GM12878 (cell line): ENCODE measurements at regions of chr18 and their contacts with region 1.

Region 1: DNA sequence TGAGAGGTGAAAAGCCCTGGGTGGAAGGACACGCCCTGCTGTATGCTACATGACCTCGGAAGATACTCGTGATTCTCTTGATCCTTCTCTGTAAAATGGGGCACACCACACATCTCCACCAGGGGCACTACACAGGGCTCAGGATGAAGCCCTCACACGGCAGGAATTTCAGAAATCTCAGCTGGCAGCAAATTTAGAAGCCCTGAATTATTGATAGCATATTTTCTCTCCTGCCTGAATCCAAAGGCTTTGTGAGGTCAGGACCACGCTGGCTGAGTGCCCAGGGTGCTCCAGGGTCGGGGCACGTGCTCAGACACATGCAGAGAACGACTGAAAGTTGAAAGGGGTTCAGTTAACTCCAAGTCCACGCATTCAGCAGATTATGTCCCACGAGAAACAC is 42.1 kb upstream of the GALR1 start:
- DNase-seq: no peak
- ATAC-seq: peak; percentile 54
- H3K4me3 ChIP-seq: no peak overlapping the region
- H3K27ac ChIP-seq: no peak overlapping the region
- H3K4me1 ChIP-seq: peaks cover 4% of the 10 kb centered on the region
- H3K27me3 ChIP-seq: no peaks in the 10 kb centered on the region
- CTCF ChIP-seq: peak in 2 of 3 experiments; percentile 47 to 61; a peak in 4 of 6 replicates
- EP300 ChIP-seq: no peak
- POLR2A ChIP-seq: no peak
- RAD21 ChIP-seq: 0 out of 2 replicates have a peak, but pooled peaks have one; percentile 2

Region 2: GRCh38 chr18:76991021-76991688 is 216.4 kb before region 1 on chr18:
- CTCF ChIA-PET with region 1: interaction called, 24 read pairs
- POLR2A ChIA-PET with region 1: no interaction called
- RAD21 ChIA-PET with region 1: interaction called, 8 read pairs
- SMC1A ChIA-PET with region 1: interaction called, 10 read pairs
- in situ Hi-C with region 1: no loop called
- intact Hi-C with region 1: no loop called
- DNase-seq: no peak
- ATAC-seq: no peak
- H3K4me3 ChIP-seq: no peak overlapping the region
- H3K27ac ChIP-seq: no peak overlapping the region
- H3K4me1 ChIP-seq: peaks cover 9% of the 10 kb centered on the region; the same call in 1 of the 2 replicates
- H3K27me3 ChIP-seq: no peaks in the 10 kb centered on the region
- CTCF ChIP-seq: no peak
- EP300 ChIP-seq: no peak
- POLR2A ChIP-seq: no peak
- RAD21 ChIP-seq: no peak

Region 3: GRCh38 chr18:77054606-77055428 is 152.7 kb before region 1 on chr18:
- CTCF ChIA-PET with region 1: interaction called, 24 read pairs
- POLR2A ChIA-PET with region 1: no interaction called
- RAD21 ChIA-PET with region 1: interaction called, 13 read pairs
- SMC1A ChIA-PET with region 1: interaction called, 15 read pairs
- in situ Hi-C with region 1: no loop called
- intact Hi-C with region 1: no loop called
- DNase-seq: peak; percentile 80
- ATAC-seq: peak; percentile 93
- H3K4me3 ChIP-seq: peak overlapping the region; percentile 53
- H3K27ac ChIP-seq: peak overlapping the region; percentile 88
- H3K4me1 ChIP-seq: peaks cover 46% of the 10 kb centered on the region
- H3K27me3 ChIP-seq: no peaks in the 10 kb centered on the region
- CTCF ChIP-seq: peak; percentile 73 to 78 (median 75)
- EP300 ChIP-seq: peak; percentile 70 to 74
- POLR2A ChIP-seq: no peak; the same call in 1 of the 2 replicates
- RAD21 ChIP-seq: peak; percentile 58

Region 4: GRCh38 chr18:77067291-77068061 is 140.1 kb before region 1 on chr18:
- CTCF ChIA-PET with region 1: interaction called, 37 read pairs
- POLR2A ChIA-PET with region 1: interaction called, 3 read pairs
- RAD21 ChIA-PET with region 1: interaction called, 11 read pairs
- SMC1A ChIA-PET with region 1: interaction called, 14 read pairs
- in situ Hi-C with region 1: no loop called
- intact Hi-C with region 1: loop called (anchors 2 kb)
- DNase-seq: peak; percentile 59
- ATAC-seq: peak; percentile 68
- H3K4me3 ChIP-seq: peak overlapping the region; percentile 23; the same call in 1 of the 2 replicates
- H3K27ac ChIP-seq: peak overlapping the region; percentile 97
- H3K4me1 ChIP-seq: peaks cover 71% of the 10 kb centered on the region
- H3K27me3 ChIP-seq: no peaks in the 10 kb centered on the region
- CTCF ChIP-seq: peak; percentile 15 to 18 (median 16); a peak in 2 of 6 replicates
- EP300 ChIP-seq: no peak
- POLR2A ChIP-seq: no peak
- RAD21 ChIP-seq: no peak

Region 5: GRCh38 chr18:77124452-77124922 is 83.1 kb before region 1 on chr18:
- CTCF ChIA-PET with region 1: interaction called, 13 read pairs
- POLR2A ChIA-PET with region 1: interaction called, 5 read pairs
- RAD21 ChIA-PET with region 1: interaction called, 20 read pairs
- SMC1A ChIA-PET with region 1: interaction called, 5 read pairs
- in situ Hi-C with region 1: no loop called
- intact Hi-C with region 1: loop called (anchors 2 kb)
- DNase-seq: peak; percentile 69
- ATAC-seq: peak; percentile 71
- H3K4me3 ChIP-seq: peak overlapping the region; percentile 72
- H3K27ac ChIP-seq: peak overlapping the region; percentile 92
- H3K4me1 ChIP-seq: peaks cover 43% of the 10 kb centered on the region
- H3K27me3 ChIP-seq: no peaks in the 10 kb centered on the region
- CTCF ChIP-seq: no peak
- EP300 ChIP-seq: 0 out of 4 replicates have a peak, but pooled peaks of 1 of the 2 experiments have one; percentile 32
- POLR2A ChIP-seq: no peak; the same call in 1 of the 2 replicates
- RAD21 ChIP-seq: no peak

Region 6: GRCh38 chr18:77191071-77191751 is 16.3 kb before region 1 on chr18:
- CTCF ChIA-PET with region 1: interaction called, 17 read pairs
- POLR2A ChIA-PET with region 1: no interaction called
- RAD21 ChIA-PET with region 1: no interaction called
- SMC1A ChIA-PET with region 1: no interaction called
- in situ Hi-C with region 1: no loop called
- intact Hi-C with region 1: no loop called
- DNase-seq: no peak
- ATAC-seq: no peak
- H3K4me3 ChIP-seq: no peak overlapping the region
- H3K27ac ChIP-seq: no peak overlapping the region
- H3K4me1 ChIP-seq: no peaks in the 10 kb centered on the region
- H3K27me3 ChIP-seq: no peaks in the 10 kb centered on the region; a peak in 1 of 4 replicates
- CTCF ChIP-seq: no peak
- EP300 ChIP-seq: no peak
- POLR2A ChIP-seq: no peak
- RAD21 ChIP-seq: no peak

Region 7: GRCh38 chr18:77522051-77522675 is 314.6 kb after region 1 on chr18:
- CTCF ChIA-PET with region 1: no interaction called
- POLR2A ChIA-PET with region 1: no interaction called
- RAD21 ChIA-PET with region 1: no interaction called
- SMC1A ChIA-PET with region 1: no interaction called
- in situ Hi-C with region 1: no loop called
- intact Hi-C with region 1: no loop called
- DNase-seq: no peak
- ATAC-seq: no peak
- H3K4me3 ChIP-seq: no peak overlapping the region
- H3K27ac ChIP-seq: no peak overlapping the region
- H3K4me1 ChIP-seq: no peaks in the 10 kb centered on the region
- H3K27me3 ChIP-seq: no peaks in the 10 kb centered on the region
- CTCF ChIP-seq: no peak
- EP300 ChIP-seq: no peak
- POLR2A ChIP-seq: no peak
- RAD21 ChIP-seq: no peak

Region 8: GRCh38 chr18:77650799-77651385 is 443.4 kb after region 1 on chr18:
- CTCF ChIA-PET with region 1: no interaction called
- POLR2A ChIA-PET with region 1: no interaction called
- RAD21 ChIA-PET with region 1: interaction called, 5 read pairs
- SMC1A ChIA-PET with region 1: no interaction called
- in situ Hi-C with region 1: no loop called
- intact Hi-C with region 1: loop called (anchors 10 kb)
- DNase-seq: no peak
- ATAC-seq: peak; percentile 77
- H3K4me3 ChIP-seq: no peak overlapping the region
- H3K27ac ChIP-seq: no peak overlapping the region
- H3K4me1 ChIP-seq: no peaks in the 10 kb centered on the region
- H3K27me3 ChIP-seq: no peaks in the 10 kb centered on the region
- CTCF ChIP-seq: peak; percentile 76 to 84 (median 82); a peak in 5 of 6 replicates
- EP300 ChIP-seq: no peak
- POLR2A ChIP-seq: no peak
- RAD21 ChIP-seq: peak; percentile 79